ENCODE measurements at regions of chr11 and their contacts with region 1.

Region 1: GRCh38 chr11:72471005-72471898 is 36.9 kb upstream of the CLPB start:
- DNase-seq: peak; percentile 66 to 84 (median 74)
- H3K4me3 ChIP-seq: no peak overlapping the region
- H3K27ac ChIP-seq: no peak overlapping the region
- H3K4me1 ChIP-seq: no peaks in the 10 kb centered on the region
- H3K27me3 ChIP-seq: peaks cover 6% of the 10 kb centered on the region
- CTCF ChIP-seq: peak; percentile 74 to 83 (median 79)
- POLR2A ChIP-seq: no peak

Region 2: GRCh38 chr11:72373163-72373562 is 98.1 kb before region 1 on chr11:
- intact Hi-C with region 1: no loop called
- DNase-seq: peak in 1 of 7 donors; percentile 65
- H3K4me3 ChIP-seq: no peak overlapping the region
- H3K27ac ChIP-seq: peak overlapping the region in 1 of 5 donors; percentile 21
- H3K4me1 ChIP-seq: no peaks in the 10 kb centered on the region
- H3K27me3 ChIP-seq: no peaks in the 10 kb centered on the region
- CTCF ChIP-seq: no peak
- POLR2A ChIP-seq: no peak

Region 3: DNA sequence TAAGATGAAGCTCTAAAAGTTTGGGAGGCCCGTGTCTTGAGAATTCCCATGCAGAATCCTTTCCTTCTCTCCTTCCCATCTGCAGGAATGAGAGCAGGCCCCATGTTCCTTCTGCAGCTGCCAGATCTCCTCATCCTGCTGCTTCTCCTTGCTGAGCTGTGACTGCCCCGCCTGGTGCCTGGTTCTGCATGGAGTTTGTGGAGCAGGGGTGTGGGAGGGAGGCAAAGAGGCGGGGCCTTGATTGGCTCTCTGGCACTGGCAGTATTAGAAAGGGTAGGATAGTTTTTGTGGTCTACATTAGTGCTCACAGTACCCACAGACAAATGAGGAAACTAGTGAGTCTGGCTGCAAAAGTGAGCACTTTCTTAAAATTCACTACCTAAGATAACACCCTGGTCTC is 54.2 kb after region 1 on chr11:
- intact Hi-C with region 1: no loop called
- DNase-seq: no peak
- H3K4me3 ChIP-seq: no peak overlapping the region
- H3K27ac ChIP-seq: no peak overlapping the region
- H3K4me1 ChIP-seq: no peaks in the 10 kb centered on the region
- H3K27me3 ChIP-seq: no peaks in the 10 kb centered on the region
- CTCF ChIP-seq: no peak
- POLR2A ChIP-seq: no peak

Region 4: GRCh38 chr11:72668611-72669347 is 197.5 kb after region 1 on chr11:
- intact Hi-C with region 1: loop called (anchors 10 kb)
- DNase-seq: no peak
- H3K4me3 ChIP-seq: no peak overlapping the region
- H3K27ac ChIP-seq: no peak overlapping the region
- H3K4me1 ChIP-seq: no peaks in the 10 kb centered on the region
- H3K27me3 ChIP-seq: no peaks in the 10 kb centered on the region
- CTCF ChIP-seq: no peak
- POLR2A ChIP-seq: no peak

Region 5: DNA sequence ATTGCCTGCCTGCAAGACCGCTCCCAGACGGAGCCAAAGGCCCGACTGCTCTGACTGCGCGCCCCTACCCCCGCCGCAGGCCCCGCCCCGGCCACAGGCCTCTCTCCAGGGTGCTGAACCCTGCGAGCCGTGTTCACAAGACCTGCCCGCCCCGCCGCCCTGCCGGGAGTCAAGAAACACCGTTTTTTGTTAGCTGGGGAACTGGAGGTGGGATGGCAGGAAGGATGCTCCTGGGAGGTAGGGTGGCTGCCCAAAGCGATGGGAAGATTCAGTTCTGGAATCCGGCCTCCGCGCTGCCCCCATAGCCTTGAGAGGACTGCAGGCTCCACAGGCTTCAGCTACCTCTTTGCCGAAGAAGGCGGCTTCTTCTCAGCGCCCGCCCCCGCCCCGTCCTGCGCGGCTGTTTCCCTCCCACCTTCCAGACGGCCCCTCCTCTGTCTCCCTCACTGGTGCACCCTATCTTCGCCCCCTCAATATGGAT is 205.6 kb after region 1 on chr11:
- intact Hi-C with region 1: loop called in 1 of 2 experiments (anchors 10 kb)
- DNase-seq: peak; percentile 68 to 84 (median 77)
- H3K4me3 ChIP-seq: no peak overlapping the region
- H3K27ac ChIP-seq: no peak overlapping the region
- H3K4me1 ChIP-seq: peaks cover 4 to 5% of the 10 kb centered on the region in 2 donors
- H3K27me3 ChIP-seq: no peaks in the 10 kb centered on the region
- CTCF ChIP-seq: no peak
- POLR2A ChIP-seq: no peak